Breast epithelium (tissue), 4 donors: ENCODE measurements at regions of chr5 and their contacts with region 1.

Region 1: DNA sequence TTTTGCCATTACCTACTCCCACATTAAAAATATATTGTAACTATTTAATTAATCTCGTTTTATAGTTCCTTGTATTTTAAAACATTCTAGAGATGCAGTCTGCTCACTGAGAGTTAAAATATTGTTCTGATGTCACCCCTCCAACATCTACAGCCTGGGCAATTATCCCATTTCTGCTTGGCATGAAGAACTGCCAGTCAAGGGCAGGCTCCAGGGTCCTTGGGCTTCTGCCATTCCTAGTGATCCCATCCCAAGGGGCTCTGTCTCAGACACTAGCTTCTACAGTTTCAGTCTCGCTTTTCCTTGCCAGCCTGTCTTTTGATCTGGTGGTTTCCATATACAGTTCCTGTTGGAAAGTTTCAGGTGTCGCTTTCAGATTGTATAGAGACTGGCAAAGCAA is 287.2 kb downstream of the TMEM232 start:
- DNase-seq: no peak
- H3K4me3 ChIP-seq: no peak overlapping the region
- H3K27ac ChIP-seq: no peak overlapping the region
- H3K4me1 ChIP-seq: no peaks in the 10 kb centered on the region
- H3K27me3 ChIP-seq: no peaks in the 10 kb centered on the region
- CTCF ChIP-seq: no peak
- POLR2A ChIP-seq: no peak

Region 2: DNA sequence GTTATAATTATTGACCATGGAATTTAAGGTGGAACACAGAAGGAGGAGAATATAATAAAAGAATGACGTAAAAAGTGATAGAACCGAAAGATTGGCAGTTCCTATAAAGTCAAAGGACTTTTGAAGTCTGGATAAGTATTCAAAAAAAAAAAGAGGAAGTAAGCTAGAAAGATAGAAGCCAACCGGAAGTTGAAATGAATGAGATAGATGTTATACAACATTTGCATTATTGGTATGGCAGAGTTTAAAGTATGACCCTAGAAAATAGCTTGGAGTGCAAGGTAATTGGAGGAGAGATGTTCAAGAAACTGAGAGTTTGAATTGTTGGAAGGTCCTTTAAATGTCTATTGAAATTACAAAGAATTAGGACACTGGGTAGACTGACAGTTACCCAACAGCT is 1398.0 kb before region 1 on chr5:
- intact Hi-C with region 1: loop called (anchors 5 kb)
- DNase-seq: no peak
- H3K4me3 ChIP-seq: no peak overlapping the region
- H3K27ac ChIP-seq: no peak overlapping the region
- H3K4me1 ChIP-seq: no peaks in the 10 kb centered on the region
- H3K27me3 ChIP-seq: no peaks in the 10 kb centered on the region
- CTCF ChIP-seq: no peak
- POLR2A ChIP-seq: no peak

Region 3: GRCh38 chr5:110150199-110150598 is 289.1 kb before region 1 on chr5:
- intact Hi-C with region 1: no loop called
- DNase-seq: no peak
- H3K4me3 ChIP-seq: no peak overlapping the region
- H3K27ac ChIP-seq: no peak overlapping the region
- H3K4me1 ChIP-seq: no peaks in the 10 kb centered on the region
- H3K27me3 ChIP-seq: no peaks in the 10 kb centered on the region
- CTCF ChIP-seq: no peak
- POLR2A ChIP-seq: no peak